Head of caudate nucleus (tissue), 42 donors: ENCODE measurements at regions of chr16 and their contacts with region 1.

Region 1: GRCh38 chr16:75319513-75320411 is 68.3 kb upstream of the BCAR1 start:
- DNase-seq: no peak

Region 2: GRCh38 chr16:75238132-75238852 is 81.5 kb before region 1 on chr16:
- intact Hi-C with region 1: loop called (anchors 5 kb)
- DNase-seq: peak; percentile 74 to 95 (median 86)